HEK293 (cell line): ENCODE measurements at regions of chr15 and their contacts with region 1.

Region 1: GRCh38 chr15:43370975-43371974 is at the starts of genes TUBGCP4 and ZSCAN29:
- H3K4me3 ChIP-seq: peak within 1 kb of the TSS; percentile 78
- H3K27ac ChIP-seq: peak within 1 kb of the TSS; percentile 86
- H3K4me1 ChIP-seq: no peaks in the 10 kb centered on the region
- CTCF ChIP-seq: peak; percentile 68

Region 2: DNA sequence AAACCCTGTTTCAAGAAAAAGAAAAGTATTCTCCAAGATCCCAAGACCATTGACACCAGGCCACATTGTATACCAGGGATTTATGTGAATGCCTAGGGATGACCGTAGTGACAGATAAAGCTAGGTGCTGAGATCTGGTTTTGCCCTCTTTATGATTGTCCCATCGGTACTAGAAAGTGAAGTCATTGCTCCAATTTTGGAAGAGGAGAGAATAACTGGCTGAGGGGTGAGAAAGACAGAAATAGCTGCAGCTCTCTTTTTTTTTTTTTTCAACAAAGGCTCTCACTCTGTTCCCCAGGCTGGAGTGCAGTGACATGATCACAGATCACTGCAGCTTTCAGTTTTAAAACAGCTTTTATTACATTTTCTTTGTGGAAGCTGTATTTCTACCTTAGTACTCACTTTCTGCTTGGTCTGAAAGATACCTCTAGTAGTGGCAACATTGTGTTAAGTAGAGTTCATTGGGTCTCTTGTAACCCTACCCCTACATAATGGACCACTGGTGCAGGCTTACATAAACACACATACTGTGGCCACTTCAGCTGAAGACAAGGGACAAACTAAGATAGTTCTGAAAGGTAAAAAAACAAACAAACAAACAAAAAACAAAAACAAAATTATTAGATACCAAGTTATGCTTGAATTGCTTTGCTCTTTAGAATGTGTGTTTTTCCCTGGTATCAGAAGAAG is 18.4 kb before region 1 on chr15:
- CTCF ChIA-PET with region 1: interaction called, 11 read pairs
- POLR2A ChIA-PET with region 1: no interaction called
- H3K4me3 ChIP-seq: no peak overlapping the region
- H3K27ac ChIP-seq: no peak overlapping the region
- H3K4me1 ChIP-seq: no peaks in the 10 kb centered on the region
- CTCF ChIP-seq: no peak

Region 3: GRCh38 chr15:43414196-43414595 is 42.9 kb after region 1 on chr15:
- CTCF ChIA-PET with region 1: interaction called, 10 read pairs
- POLR2A ChIA-PET with region 1: no interaction called
- H3K4me3 ChIP-seq: no peak overlapping the region
- H3K27ac ChIP-seq: no peak overlapping the region
- H3K4me1 ChIP-seq: no peaks in the 10 kb centered on the region
- CTCF ChIP-seq: no peak